ENCODE measurements at regions of chr15 and their contacts with region 1.

Region 1: GRCh38 chr15:92097474-92098178 is 244.1 kb downstream of the SLCO3A1 start:
- DNase-seq: peak; percentile 45 to 71
- H3K4me3 ChIP-seq: no peak overlapping the region
- H3K4me3 Mint-ChIP-seq: no peak overlapping the region
- H3K27ac Mint-ChIP-seq: no peak overlapping the region
- H3K4me1 ChIP-seq: no peaks in the 10 kb centered on the region
- H3K4me1 Mint-ChIP-seq: peaks cover 10% of the 10 kb centered on the region
- H3K27me3 ChIP-seq: peaks cover 2% of the 10 kb centered on the region
- H3K27me3 Mint-ChIP-seq: peaks cover 13% of the 10 kb centered on the region
- CTCF ChIP-seq: peak; percentile 83 to 88

Region 2: DNA sequence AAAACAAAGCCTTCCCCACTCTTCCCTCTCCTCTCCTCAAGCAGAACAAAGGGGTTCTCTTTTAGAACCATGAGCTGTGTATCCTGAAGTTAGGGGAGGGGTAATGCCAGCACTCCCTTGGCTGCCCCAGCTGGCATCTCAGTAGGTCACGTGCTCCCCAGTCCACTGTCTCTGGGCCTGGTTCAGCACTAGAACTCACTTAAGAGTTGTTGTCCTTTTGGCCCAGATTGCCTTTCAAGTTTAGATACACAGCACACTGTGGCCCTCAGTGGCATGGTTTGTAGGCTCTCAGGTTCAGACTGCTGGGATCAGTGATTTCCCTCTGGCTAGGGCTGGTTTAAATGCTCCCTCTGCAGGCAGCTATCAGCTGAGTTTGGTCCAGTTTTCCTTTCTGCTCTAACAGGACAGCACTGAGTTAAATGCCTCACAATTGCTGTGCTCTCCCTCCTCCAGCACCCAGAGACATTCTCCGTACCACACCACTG is 107.7 kb after region 1 on chr15:
- CTCF ChIA-PET with region 1: interaction called, 7 read pairs
- POLR2A ChIA-PET with region 1: no interaction called
- intact Hi-C with region 1: loop called (anchors 1 kb)
- DNase-seq: peak in 1 of 2 experiments; percentile 41
- H3K4me3 ChIP-seq: no peak overlapping the region
- H3K4me3 Mint-ChIP-seq: no peak overlapping the region
- H3K27ac Mint-ChIP-seq: no peak overlapping the region
- H3K4me1 ChIP-seq: no peaks in the 10 kb centered on the region
- H3K4me1 Mint-ChIP-seq: no peaks in the 10 kb centered on the region
- H3K27me3 ChIP-seq: no peaks in the 10 kb centered on the region
- H3K27me3 Mint-ChIP-seq: peaks cover 3% of the 10 kb centered on the region
- CTCF ChIP-seq: peak in 1 of 2 experiments; percentile 27

Region 3: DNA sequence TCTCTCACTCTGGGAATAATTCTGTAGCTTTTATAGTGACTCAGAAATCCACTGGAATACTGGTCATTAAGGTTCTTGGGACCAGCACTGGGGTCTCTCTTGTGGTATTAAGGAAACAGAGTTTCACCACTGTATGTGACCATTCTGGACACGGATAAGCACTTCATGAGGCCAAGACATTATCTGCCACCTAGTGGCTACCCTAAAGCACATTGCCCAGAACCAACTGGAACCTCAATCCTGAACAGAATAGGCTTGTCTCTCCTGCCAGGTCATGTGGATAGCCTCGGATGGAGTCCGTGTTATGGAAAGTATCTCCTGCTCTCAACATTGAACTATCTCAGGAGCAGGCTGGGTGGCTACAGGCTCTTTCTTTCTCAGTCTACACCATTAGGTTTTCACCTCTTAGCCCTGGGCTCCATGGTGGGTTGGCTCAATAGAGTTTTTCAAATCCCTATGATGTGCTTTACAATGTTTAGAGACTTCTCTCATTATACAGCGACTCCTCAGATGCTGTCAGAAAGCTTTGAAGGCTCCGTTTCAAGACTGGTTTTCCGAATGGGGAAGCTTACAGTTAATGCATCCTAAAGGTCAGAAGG is 128.5 kb after region 1 on chr15:
- CTCF ChIA-PET with region 1: interaction called, 6 read pairs
- POLR2A ChIA-PET with region 1: no interaction called
- intact Hi-C with region 1: loop called (anchors 1 kb)
- DNase-seq: peak in 1 of 2 experiments; percentile 42
- H3K4me3 ChIP-seq: no peak overlapping the region
- H3K4me3 Mint-ChIP-seq: no peak overlapping the region
- H3K27ac Mint-ChIP-seq: no peak overlapping the region
- H3K4me1 ChIP-seq: no peaks in the 10 kb centered on the region
- H3K4me1 Mint-ChIP-seq: no peaks in the 10 kb centered on the region
- H3K27me3 ChIP-seq: no peaks in the 10 kb centered on the region
- H3K27me3 Mint-ChIP-seq: peaks cover 11% of the 10 kb centered on the region
- CTCF ChIP-seq: peak; percentile 65 to 66

Region 4: DNA sequence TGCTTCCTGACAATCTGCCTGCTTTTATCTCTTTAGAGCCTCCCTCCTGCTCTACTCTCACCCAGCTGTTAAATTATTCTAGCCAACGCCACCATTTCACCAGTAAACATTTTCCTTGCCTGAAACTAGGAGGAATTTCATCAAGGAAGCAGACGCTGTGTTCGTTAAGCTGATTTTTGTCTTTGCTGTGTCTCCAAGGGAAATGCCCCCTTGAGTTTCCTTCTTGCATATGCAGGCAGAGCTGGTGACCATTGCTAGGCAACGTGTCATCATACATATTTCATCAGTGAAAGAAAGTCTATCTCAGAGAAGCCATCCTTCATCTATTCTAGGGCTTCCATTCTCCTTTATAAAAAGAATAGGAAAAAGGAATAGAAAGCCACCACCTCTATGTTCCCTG is 209.0 kb after region 1 on chr15:
- CTCF ChIA-PET with region 1: no interaction called
- POLR2A ChIA-PET with region 1: no interaction called
- intact Hi-C with region 1: loop called (anchors 1 kb)
- DNase-seq: peak in 1 of 2 experiments; percentile 33
- H3K4me3 ChIP-seq: no peak overlapping the region
- H3K4me3 Mint-ChIP-seq: no peak overlapping the region
- H3K27ac Mint-ChIP-seq: peak overlapping the region; percentile 19
- H3K4me1 ChIP-seq: no peaks in the 10 kb centered on the region
- H3K4me1 Mint-ChIP-seq: no peaks in the 10 kb centered on the region
- H3K27me3 ChIP-seq: no peaks in the 10 kb centered on the region
- H3K27me3 Mint-ChIP-seq: peaks cover 17% of the 10 kb centered on the region
- CTCF ChIP-seq: peak in 1 of 2 experiments; percentile 29

Region 5: DNA sequence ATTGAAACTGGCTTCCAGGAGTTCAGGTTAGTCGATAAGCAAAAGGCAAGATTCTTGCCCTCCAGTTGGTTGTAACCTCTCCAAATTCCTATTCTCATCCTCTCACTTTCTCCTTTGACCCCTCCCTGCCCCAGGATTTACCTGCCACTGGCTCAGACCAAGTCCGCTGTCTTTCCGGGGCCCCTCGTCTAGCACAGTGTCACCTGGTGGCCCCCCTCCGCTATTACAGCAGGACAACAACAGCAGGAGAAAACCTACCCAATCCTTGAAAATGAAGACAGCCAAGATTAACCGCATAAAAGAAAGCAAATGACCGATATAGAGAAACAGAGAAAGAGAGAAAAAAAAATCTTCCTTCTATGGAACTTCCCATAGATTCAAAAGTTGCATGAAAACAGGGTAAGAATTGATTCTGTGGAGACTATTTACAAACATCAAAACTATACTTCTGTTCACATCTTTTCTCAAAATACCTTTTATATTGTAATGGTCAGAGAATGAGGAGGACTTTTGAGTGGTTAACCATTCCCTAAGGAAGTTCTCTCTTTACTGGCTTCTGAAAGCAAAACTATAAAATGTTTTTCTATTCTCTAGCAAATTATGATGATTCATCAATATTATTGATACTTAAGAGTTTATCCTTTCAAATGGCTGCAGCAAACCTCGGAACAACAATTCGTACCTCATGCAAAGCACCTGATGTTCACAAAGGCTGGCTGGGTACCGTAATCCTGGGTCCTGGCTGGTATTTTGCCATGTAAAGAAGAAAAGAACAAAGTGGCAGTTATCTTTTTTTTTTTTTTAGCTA is 286.1 kb after region 1 on chr15:
- CTCF ChIA-PET with region 1: interaction called, 4 read pairs
- POLR2A ChIA-PET with region 1: no interaction called
- intact Hi-C with region 1: loop called (anchors 1 kb)
- DNase-seq: peak in 1 of 2 experiments; percentile 57
- H3K4me3 ChIP-seq: no peak overlapping the region
- H3K4me3 Mint-ChIP-seq: no peak overlapping the region
- H3K27ac Mint-ChIP-seq: no peak overlapping the region
- H3K4me1 ChIP-seq: no peaks in the 10 kb centered on the region
- H3K4me1 Mint-ChIP-seq: no peaks in the 10 kb centered on the region
- H3K27me3 ChIP-seq: no peaks in the 10 kb centered on the region
- H3K27me3 Mint-ChIP-seq: peaks cover 30% of the 10 kb centered on the region
- CTCF ChIP-seq: peak; percentile 73 to 78